ENCODE measurements at regions of chr17 and their contacts with region 1.

Region 1: GRCh38 chr17:61168468-61168867 is 231.2 kb upstream of the TBX2 start:
- DNase-seq: no peak
- CTCF ChIP-seq: no peak

Region 2: DNA sequence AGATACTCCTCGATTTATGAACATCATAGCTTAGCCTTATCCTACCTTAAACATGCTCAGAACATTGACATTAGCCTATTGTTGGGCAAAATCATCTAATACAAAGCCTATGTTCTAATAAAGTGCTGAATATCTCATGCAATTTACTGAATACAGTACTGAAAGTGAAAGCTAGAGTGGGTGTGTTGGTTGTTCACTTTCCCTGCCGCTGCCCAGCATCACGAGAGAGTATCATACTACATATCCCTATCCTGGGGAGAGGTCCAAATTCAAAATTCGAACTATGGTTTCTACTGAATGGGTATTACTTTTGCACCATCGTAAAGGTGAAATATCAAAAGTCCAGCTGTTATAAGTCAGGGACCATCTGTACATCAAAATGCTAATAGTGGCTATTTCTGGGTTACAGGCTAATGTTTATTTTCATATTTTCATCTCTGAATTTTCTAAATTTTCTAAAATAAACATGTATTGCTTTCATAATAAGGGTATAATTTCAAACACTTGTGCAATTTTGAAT is 368.0 kb after region 1 on chr17:
- CTCF ChIA-PET with region 1: no interaction called
- POLR2A ChIA-PET with region 1: interaction called, 10 read pairs
- DNase-seq: no peak
- CTCF ChIP-seq: no peak

Measured in GM10248 (cell line).